ENCODE measurements at regions of chr4 and their contacts with region 1.

Region 1: DNA sequence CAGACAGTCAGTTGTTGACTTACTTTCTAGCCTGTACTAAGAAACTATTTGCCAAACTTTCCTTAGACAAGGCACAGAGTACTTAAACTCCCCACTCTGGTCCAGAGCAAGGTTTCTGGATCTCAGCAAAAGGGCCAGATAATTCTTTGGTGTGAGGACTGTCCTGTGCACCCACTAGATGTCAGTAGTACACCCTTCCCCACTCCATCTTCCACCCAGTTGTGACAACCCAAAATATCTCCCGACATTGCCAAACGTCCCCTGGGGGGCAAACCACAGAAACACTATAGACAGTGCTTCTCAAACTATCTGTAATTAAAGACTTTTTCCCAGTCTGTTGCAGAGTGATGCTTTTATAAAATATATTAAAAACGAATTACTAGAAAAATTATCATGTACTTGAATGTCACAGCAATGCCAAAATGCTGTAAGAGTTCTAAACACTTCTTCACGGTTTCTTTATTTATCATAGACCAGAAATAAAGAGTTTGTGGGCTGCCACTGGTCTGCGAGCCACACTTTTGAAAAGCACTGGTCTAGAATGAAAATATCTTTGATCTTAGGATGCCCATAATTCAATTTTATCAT is 203.5 kb downstream of the PRDM5 start:
- DNase-seq: peak; percentile 20
- ATAC-seq: peak; percentile 85

Region 2: DNA sequence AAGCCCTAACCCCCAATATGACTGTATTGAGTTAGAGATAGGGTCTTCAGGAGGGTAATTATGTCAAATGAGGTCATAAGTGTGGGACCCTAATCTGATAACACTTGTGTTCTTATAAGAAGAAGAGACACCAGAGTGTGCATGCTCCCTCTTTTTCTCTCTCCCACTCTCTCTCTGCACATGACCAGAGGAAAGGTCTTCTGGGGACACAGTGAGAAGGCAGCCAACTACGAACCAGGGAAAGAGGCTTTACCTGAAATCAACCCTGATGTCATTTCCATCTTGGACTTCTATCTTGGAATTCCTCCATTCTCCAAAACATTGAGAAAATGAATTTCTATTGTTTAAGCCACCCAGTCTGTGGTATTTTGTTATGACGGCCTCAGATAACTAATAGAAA is 555.2 kb before region 1 on chr4:
- intact Hi-C with region 1: loop called (anchors 10 kb)
- DNase-seq: no peak
- ATAC-seq: no peak

Region 3: GRCh38 chr4:120557372-120557771 is 161.7 kb before region 1 on chr4:
- intact Hi-C with region 1: no loop called
- DNase-seq: no peak
- ATAC-seq: no peak

Region 4: DNA sequence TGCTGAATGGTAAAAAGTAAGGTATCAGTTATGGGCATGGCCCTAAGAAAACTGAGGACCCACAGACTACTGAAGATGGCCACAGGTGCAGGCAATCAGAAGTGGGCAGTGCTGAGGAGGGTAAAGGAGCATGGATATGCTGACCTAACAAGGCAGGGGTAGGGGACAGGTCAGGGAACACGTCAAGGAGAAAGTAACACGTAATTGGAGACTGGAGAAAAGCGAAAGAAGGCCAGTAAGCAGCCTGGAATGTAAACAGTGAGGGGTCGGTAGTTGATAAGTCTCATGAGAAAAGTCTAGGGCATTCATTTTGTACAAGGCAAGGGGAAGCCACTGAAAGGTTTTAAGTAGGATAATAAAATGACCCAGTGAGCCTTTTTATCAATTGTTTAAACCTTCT is 50.2 kb after region 1 on chr4:
- intact Hi-C with region 1: loop called (anchors 5 kb)
- DNase-seq: peak; percentile 20
- ATAC-seq: no peak

Region 5: DNA sequence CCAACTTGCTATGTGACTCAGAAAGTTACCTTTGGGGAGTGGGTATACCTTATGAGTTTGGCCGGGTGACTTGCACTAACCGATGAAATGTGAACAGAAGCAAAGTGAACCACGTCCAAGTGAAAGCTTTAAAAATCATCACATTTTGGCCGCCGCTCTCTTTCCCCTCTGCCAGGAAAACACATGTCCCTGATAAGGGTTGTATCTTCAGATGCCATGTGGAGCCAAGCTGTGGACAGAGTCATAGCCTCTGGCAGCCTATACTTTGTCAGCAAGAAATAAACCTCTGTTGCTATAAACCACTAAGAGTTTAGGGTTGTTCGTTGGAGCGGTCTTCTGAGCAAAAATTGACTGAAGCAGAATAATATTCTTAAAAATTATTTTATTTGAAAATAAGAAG is 111.1 kb after region 1 on chr4:
- intact Hi-C with region 1: loop called (anchors 10 kb)
- DNase-seq: peak; percentile 60
- ATAC-seq: peak; percentile 94

Region 6: GRCh38 chr4:120922381-120923206 is 203.5 kb after region 1 on chr4 and contains the start of gene PRDM5:
- intact Hi-C with region 1: loop called (anchors 5 kb)
- DNase-seq: peak; percentile 80
- ATAC-seq: peak; percentile 83
- total RNA-seq, gene PRDM5: 7.4 TPM

Region 7: DNA sequence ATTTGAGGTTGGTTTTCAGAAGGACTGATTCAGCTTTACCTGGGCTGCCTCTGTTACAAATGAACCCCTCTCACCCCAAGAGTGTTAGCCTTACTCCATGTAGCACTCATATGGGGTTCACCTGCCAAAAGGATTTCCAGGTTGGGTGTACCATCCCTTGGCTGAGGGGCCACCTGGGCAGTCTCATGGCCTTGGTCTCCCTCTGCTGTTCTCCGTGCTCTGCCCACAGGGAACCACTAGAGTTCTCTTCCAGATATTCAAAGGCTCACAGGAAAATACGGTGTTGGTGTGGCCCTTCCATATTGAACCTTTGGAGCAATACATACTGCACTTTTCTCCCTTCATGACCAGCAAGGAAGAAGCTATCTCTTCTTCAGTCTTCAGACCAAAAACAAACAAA is 221.5 kb after region 1 on chr4:
- intact Hi-C with region 1: loop called (anchors 5 kb)
- DNase-seq: no peak
- ATAC-seq: no peak

Region 8: GRCh38 chr4:121096629-121097028 is 377.6 kb after region 1 on chr4:
- intact Hi-C with region 1: loop called (anchors 5 kb)
- DNase-seq: no peak
- ATAC-seq: no peak

Measured in Right ventricle myocardium inferior (tissue), 1 donor.